PC-9 (cell line): ENCODE measurements at regions of chr19 and their contacts with region 1.

Region 1: DNA sequence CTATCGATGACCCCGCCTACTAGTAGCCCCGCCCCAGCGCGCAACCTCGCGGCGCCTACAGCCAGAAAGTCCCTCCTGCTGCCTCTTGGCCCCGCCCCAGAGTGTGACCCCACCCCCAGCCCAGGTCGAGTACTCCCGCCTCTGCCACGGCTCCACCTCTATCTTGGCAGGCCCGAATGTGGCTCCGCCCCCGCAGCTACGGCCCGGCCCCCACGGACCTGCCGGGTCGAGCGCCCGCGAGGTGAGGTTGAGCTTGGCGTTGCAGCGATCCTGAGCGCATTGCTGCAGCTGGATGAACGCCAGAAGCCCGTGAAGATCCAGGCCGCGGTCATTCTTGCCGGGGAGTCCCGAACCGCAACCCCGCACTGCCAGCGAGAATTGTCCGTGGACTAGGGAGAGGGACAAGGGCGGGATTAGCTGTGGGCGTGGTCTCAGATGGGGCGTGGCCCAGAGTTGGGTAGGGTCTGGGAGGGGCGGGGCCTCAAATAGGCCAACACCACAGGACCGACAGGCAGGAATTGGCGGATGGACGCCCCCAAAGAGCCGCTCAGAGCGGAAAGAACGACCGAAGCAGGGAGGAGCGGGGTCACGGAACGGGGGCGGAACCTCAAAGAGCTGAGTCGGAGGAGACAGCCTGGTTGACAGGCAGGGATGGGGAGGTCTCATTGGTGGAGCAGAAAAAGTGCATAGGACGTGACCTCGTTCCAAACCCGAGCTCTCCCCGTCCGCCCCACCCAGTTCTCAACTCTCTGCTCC is 1.8 kb downstream of the LYPD3 start:
- DNase-seq: peak; percentile 80 to 91
- H3K4me3 ChIP-seq: peak overlapping the region; percentile 80
- H3K27ac ChIP-seq: peak overlapping the region; percentile 63
- H3K4me1 ChIP-seq: peaks cover 32% of the 10 kb centered on the region
- H3K27me3 ChIP-seq: no peaks in the 10 kb centered on the region
- CTCF ChIP-seq: no peak

Region 2: DNA sequence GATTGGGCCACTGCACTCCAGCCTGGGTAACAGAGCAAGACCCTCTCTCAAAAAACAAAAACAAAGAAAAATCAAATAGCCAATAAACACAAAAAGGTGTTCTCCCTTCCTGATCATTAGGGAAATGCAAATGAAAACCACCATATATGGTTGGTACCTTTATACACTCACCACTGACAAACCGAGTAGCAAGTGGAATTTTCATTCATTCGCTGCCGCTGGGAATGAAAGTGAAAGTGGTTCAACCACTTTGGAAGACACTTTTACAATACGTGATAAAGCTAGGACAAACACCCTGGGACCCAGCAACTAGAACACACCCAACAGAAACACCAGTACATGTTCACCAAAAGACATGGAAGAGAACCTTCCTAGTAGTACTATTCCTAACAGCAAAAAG is 1414.6 kb before region 1 on chr19:
- CTCF ChIA-PET with region 1: no interaction called
- POLR2A ChIA-PET with region 1: no interaction called
- intact Hi-C with region 1: no loop called
- DNase-seq: peak in 1 of 2 experiments; percentile 34
- H3K4me3 ChIP-seq: peak overlapping the region; percentile 18; the same call in 1 of the 2 replicates
- H3K27ac ChIP-seq: no peak overlapping the region
- H3K4me1 ChIP-seq: peaks cover 34% of the 10 kb centered on the region
- H3K27me3 ChIP-seq: no peaks in the 10 kb centered on the region
- CTCF ChIP-seq: no peak

Region 3: GRCh38 chr19:43474986-43475705 is 11.6 kb after region 1 on chr19:
- CTCF ChIA-PET with region 1: no interaction called
- POLR2A ChIA-PET with region 1: interaction called, 44 read pairs
- intact Hi-C with region 1: no loop called
- DNase-seq: peak; percentile 81 to 98
- H3K4me3 ChIP-seq: peak overlapping the region; percentile 54; the same call in 1 of the 2 replicates
- H3K27ac ChIP-seq: peak overlapping the region; percentile 66
- H3K4me1 ChIP-seq: peaks cover 27% of the 10 kb centered on the region
- H3K27me3 ChIP-seq: no peaks in the 10 kb centered on the region
- CTCF ChIP-seq: no peak

Region 4: DNA sequence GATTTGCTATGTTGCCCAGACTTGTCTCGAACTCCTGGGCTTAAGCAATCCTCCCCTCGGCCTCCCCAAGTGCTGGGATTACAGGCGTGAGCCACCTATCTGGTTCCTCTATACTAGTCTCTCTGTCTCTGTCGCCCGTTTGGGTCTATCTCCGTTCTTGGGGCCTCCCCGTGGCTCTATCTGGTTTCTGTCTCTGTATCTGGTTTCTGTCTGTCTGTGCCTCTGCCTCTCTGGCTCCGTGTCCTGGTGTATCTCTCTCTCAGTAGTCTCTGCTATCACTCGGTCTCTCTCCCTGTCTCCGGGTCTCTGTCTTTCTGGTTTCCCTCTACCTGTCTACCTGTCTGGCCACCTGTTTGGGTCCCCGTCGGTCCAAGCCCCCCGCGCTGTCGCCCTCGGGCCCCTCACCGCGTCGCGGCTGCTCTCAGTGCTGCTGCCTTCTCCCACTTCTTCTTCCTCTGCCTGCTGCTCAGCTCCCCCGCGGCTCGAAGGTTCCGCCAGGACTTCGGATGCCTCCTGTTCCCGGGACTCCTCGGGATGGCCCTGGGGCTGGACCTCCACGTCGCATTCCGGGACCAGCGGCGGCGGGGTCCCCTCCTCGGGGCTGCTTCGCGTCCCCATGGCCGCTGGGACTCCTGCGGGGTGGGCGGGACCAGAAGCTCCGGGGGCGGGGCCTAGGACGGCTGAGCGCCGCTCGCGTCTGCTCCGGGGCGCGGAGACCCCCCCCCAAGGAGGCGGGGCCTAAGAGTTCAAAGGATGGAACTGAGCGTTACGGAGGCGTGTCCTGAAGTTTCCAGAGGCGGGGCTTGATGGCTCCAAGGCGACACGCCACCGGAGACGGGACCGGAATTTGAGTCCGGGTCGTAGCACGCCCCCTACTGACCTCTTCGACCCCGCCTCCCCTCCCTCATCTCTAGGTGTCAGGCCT is 40.2 kb after region 1 on chr19:
- CTCF ChIA-PET with region 1: interaction called, 4 read pairs
- POLR2A ChIA-PET with region 1: interaction called, 7 read pairs
- intact Hi-C with region 1: loop called (anchors 1 kb)
- DNase-seq: peak; percentile 83 to 94
- H3K4me3 ChIP-seq: peak overlapping the region; percentile 74
- H3K27ac ChIP-seq: peak overlapping the region; percentile 63
- H3K4me1 ChIP-seq: peaks cover 11% of the 10 kb centered on the region
- H3K27me3 ChIP-seq: no peaks in the 10 kb centered on the region
- CTCF ChIP-seq: no peak